Dendritic cell treated with granulocyte-macrophage colony-stimulating factor and Interleukin-4, amounts not matched to agents 40 ng/mL and 50 ng/mL, for 4 days (primary cell): ENCODE measurements at regions of chr19 and their contacts with region 1.

Region 1: GRCh38 chr19:55516878-55517620 is 19.9 kb downstream of the SBK2 start:
- H3K4me3 Mint-ChIP-seq: peak overlapping the region; percentile 76
- H3K27ac Mint-ChIP-seq: peak overlapping the region; percentile 93
- H3K4me1 Mint-ChIP-seq: peaks cover 6% of the 10 kb centered on the region
- H3K27me3 Mint-ChIP-seq: peaks cover 21% of the 10 kb centered on the region

Region 2: GRCh38 chr19:55418185-55418584 is 98.9 kb before region 1 on chr19:
- intact Hi-C with region 1: no loop called
- H3K4me3 Mint-ChIP-seq: peak overlapping the region; percentile 23
- H3K27ac Mint-ChIP-seq: peak overlapping the region; percentile 75
- H3K4me1 Mint-ChIP-seq: peaks cover 14% of the 10 kb centered on the region
- H3K27me3 Mint-ChIP-seq: peaks cover 17% of the 10 kb centered on the region

Region 3: DNA sequence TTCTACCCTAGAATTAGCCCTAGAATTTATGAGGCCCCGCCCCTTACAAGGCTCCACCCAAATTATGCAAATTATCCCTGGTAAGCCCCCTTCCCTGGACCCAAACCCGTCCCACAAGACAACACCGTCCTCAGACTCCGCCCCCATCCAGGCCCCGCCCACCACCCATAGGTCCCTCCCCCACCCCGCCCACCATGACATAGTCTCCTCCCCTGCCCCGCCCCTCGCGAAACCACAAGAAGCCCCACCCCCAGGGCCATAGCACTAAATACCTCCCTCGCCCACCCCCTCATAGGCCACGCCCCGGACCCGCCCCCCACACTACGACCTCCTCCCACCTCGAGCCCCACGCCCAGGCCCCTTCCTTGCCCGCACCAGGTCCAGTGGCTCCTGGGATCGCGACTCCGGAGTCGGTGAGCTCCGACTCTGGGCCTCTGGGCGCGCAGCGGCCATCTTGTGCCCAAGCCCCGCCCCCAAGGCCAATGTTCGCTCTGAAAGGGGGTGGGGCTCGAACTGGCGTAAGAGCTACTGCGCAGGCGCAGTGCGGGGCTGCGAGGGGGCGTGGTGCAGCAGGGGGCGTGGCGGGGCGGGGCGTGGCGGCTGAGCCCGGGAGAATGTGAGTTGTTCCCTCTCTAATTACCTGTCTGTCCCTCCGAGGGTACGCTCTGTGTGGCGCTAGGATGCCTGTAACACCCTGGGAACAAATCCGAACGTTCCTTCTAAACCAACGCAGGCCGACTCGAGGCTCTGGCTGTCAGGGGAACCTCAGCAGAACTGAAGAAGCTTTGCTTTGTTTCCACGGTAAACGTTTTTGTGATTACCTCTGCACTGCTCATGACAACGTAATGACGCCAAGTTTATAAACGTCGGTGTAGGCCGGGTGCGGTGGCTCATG is 107.3 kb after region 1 on chr19 and contains the start of gene ZNF784:
- intact Hi-C with region 1: loop called (anchors 2 kb)
- H3K4me3 Mint-ChIP-seq: peak within 1 kb of the TSS; percentile 90
- H3K27ac Mint-ChIP-seq: peak within 1 kb of the TSS; percentile 98
- H3K4me1 Mint-ChIP-seq: peaks cover 47% of the 10 kb centered on the region
- H3K27me3 Mint-ChIP-seq: peaks cover 2% of the 10 kb centered on the region

Region 4: GRCh38 chr19:55632463-55632834 is 115.4 kb after region 1 on chr19:
- intact Hi-C with region 1: loop called (anchors 1 kb)
- H3K4me3 Mint-ChIP-seq: no peak overlapping the region
- H3K27ac Mint-ChIP-seq: peak overlapping the region; percentile 38
- H3K4me1 Mint-ChIP-seq: peaks cover 37% of the 10 kb centered on the region
- H3K27me3 Mint-ChIP-seq: no peaks in the 10 kb centered on the region

Region 5: GRCh38 chr19:55753401-55753800 is 236.4 kb after region 1 on chr19:
- intact Hi-C with region 1: no loop called
- H3K4me3 Mint-ChIP-seq: no peak overlapping the region
- H3K27ac Mint-ChIP-seq: no peak overlapping the region
- H3K4me1 Mint-ChIP-seq: no peaks in the 10 kb centered on the region
- H3K27me3 Mint-ChIP-seq: no peaks in the 10 kb centered on the region